ENCODE measurements at regions of chr3 and their contacts with region 1.

Region 1: DNA sequence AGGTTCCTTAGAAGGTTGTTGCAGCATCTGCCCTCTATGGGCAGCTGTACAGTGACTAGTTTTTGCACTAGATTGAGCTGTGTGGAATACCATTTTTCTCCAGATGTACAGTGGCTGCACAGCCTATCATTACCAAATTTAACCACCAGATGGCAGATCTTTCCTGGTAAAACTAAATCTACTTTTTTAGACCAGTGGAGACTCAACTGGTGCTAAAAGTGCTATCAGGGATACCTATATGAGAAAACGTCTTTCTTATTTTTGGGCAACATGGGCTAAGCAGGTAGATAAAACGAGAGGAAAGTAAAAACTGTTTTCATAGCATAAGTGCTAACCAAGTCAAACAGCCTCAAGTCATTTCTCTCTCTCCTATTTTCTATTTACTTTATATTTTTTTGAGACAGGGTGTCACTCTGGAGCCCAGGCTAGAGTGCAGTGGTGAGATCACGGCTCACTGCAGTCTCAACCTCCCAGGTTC is 21.2 kb downstream of the IGSF10 start:
- DNase-seq: peak; percentile 69
- ATAC-seq: peak; percentile 94
- H3K4me3 ChIP-seq: no peak overlapping the region
- H3K27ac ChIP-seq: no peak overlapping the region
- H3K4me1 ChIP-seq: 0 out of 2 replicates have a peak, but pooled peaks cover 2% of the 10 kb centered on the region
- H3K27me3 ChIP-seq: no peaks in the 10 kb centered on the region
- CTCF ChIP-seq: peak; percentile 84

Region 2: DNA sequence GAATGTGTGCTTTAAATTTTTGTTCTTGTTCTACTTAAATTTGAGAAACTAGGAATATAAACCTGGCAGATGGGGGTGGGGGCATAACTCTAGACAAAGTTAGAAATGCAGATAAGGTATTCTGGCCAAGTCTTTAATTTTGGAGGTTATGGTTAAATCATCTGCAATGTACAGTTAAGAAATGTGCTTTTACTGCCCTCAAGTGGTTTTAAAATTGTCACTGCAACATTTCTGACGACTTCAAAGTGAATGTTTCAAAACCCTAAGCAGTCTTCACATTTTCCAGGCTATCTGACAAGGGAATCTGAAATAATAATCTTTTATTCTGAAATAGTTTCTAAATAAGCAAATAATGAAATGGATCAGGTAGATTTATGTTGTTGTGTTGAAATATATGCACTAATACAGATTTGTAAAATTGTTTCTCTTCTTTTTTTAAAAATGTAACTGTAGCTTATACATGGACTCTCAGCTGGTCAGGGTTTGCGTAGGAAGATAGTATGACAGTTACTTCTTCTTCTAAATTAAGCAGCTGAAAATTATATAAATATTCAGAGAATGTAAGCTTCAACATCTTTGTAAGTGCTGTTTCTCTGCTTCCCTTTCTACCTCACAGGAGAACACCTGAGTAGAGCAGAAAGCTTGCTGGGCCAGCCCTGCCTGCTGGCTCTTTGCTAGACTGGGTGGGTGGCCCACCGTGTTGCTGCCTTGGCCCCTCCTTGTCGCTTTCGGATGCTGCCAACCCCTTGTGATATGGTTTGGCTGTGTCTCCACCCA is 478.8 kb after region 1 on chr3:
- CTCF ChIA-PET with region 1: no interaction called
- POLR2A ChIA-PET with region 1: no interaction called
- in situ Hi-C with region 1: no loop called
- intact Hi-C with region 1: loop called (anchors 1 kb)
- DNase-seq: peak; percentile 56
- ATAC-seq: peak; percentile 81; the same call in 1 of the 2 replicates
- H3K4me3 ChIP-seq: no peak overlapping the region
- H3K27ac ChIP-seq: no peak overlapping the region
- H3K4me1 ChIP-seq: no peaks in the 10 kb centered on the region
- H3K27me3 ChIP-seq: no peaks in the 10 kb centered on the region
- CTCF ChIP-seq: peak; percentile 75; the same call in 1 of the 2 replicates

Measured in Panc1 (cell line).